ENCODE measurements at regions of chr15 and their contacts with region 1.

Region 1: GRCh38 chr15:41660235-41661077 is at the start of gene MGA:
- DNase-seq: peak; percentile 98
- ATAC-seq: peak; percentile 80
- H3K4me3 ChIP-seq: peak within 1 kb of the TSS; percentile 58 to 72 (median 63)
- H3K4me3 Mint-ChIP-seq: peak within 1 kb of the TSS; percentile 89
- H3K27ac ChIP-seq: peak within 1 kb of the TSS; percentile 94 to 95
- H3K27ac Mint-ChIP-seq: peak within 1 kb of the TSS; percentile 96
- H3K4me1 ChIP-seq: peaks cover 26 to 28% of the 10 kb centered on the region in 2 donors
- H3K4me1 Mint-ChIP-seq: peaks cover 44% of the 10 kb centered on the region
- H3K27me3 ChIP-seq: no peaks in the 10 kb centered on the region
- H3K27me3 Mint-ChIP-seq: no peaks in the 10 kb centered on the region
- CTCF ChIP-seq: no peak
- total RNA-seq, gene MGA: 77.2 and 79.7 TPM in 2 replicates

Region 2: DNA sequence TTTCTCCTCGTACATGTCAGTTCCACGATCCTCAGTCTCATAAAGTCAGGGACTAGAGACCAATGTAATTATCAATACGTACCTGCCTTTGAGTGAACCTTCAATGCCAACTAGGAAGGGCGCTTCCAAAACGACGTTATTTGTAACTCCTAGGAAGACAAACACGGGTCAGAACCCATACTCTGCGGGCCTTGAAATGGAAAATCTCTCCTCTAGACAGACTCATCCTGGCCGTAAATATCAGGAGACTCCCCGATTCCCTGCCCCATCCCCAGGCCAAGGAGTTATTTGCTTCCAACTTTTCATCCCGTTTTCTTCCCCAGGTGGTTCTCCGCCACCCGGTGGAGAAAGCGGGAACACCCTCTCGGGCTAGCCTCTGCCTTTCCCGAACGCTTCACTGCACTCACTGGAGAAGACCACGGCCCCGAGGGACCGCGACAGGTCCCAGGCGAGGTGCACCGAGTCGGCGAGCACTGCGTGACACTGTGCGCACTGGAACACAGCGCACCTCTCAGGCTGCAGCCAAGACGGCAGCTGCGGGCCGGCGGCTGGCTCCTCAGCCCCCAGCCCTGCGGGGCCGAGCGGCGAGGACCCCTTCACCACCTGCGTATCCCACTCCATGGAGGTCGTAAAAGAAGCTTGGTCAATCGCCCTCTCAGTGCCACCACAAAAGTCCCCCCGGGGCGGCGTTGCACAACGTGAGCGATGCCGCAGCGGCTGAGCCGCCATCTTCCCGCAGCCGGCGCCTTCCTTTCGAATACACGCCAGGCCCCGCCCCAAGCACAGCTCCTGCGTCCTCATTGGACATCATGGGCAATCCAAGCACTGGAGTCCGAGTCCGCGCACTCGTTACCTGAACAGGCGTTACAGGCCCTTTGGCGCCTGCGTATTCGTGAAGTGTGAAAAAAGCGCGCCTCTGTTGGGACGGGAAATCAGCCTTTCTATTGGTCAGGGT is 328.3 kb before region 1 on chr15 and contains the start of gene OIP5:
- CTCF ChIA-PET with region 1: no interaction called
- POLR2A ChIA-PET with region 1: no interaction called
- intact Hi-C with region 1: loop called (anchors 2 kb)
- DNase-seq: peak; percentile 98
- ATAC-seq: peak; percentile 94
- H3K4me3 ChIP-seq: peak within 1 kb of the TSS; percentile 84 to 98 (median 89)
- H3K4me3 Mint-ChIP-seq: peak within 1 kb of the TSS; percentile 99
- H3K27ac ChIP-seq: peak within 1 kb of the TSS; percentile 45 to 76
- H3K27ac Mint-ChIP-seq: peak within 1 kb of the TSS; percentile 95
- H3K4me1 ChIP-seq: peaks cover 13 to 19% of the 10 kb centered on the region in 2 donors
- H3K4me1 Mint-ChIP-seq: peaks cover 27% of the 10 kb centered on the region
- H3K27me3 ChIP-seq: no peaks in the 10 kb centered on the region
- H3K27me3 Mint-ChIP-seq: no peaks in the 10 kb centered on the region
- CTCF ChIP-seq: peak; percentile 57
- total RNA-seq, gene OIP5: 0.84 and 2.3 TPM in 2 replicates

Region 3: DNA sequence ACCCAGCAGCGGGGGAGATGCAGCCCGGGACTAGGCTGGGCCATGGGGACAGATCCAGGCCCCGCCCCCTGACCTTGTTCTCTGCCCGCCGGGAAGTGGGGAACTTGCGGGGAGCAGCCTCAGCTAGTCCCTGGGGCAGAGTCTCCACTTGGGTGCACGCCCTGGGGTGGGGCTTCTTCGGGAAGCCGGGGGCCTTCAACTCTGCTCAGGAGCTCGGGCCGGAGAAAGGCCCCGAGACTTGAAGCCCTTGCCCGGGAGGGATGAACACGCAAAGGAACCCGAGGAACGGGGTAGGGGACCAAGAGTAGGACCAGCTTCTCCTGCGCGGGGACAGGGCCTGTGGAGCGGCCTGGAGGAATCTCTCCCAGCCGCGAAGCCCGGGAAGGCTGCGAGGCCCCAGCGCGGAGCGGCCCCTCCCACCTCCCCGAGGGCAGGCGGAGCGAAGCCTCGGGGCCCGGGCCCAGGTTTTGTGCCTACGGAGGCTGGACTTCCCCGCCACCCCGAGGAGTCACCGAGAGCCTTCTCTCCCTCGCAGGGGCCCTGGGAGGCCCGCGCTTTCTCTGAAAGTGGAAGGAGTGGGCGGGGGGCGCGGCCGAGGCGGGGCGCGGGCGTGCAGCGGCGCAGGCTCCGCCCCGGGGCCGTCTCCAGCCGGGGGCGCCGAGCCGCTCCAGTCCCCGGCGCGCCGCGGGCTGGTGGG is 167.1 kb before region 1 on chr15 and contains the start of gene ITPKA:
- CTCF ChIA-PET with region 1: no interaction called
- POLR2A ChIA-PET with region 1: no interaction called
- intact Hi-C with region 1: loop called (anchors 2 kb)
- DNase-seq: peak; percentile 87
- ATAC-seq: peak; percentile 88
- H3K4me3 ChIP-seq: peak within 1 kb of the TSS; percentile 5 to 81 (median 67)
- H3K4me3 Mint-ChIP-seq: peak within 1 kb of the TSS; percentile 81
- H3K27ac ChIP-seq: no peak within 1 kb of the TSS
- H3K27ac Mint-ChIP-seq: peak within 1 kb of the TSS; percentile 50
- H3K4me1 ChIP-seq: peaks cover 30 to 32% of the 10 kb centered on the region in 2 donors
- H3K4me1 Mint-ChIP-seq: peaks cover 11% of the 10 kb centered on the region
- H3K27me3 ChIP-seq: peaks cover 0 to 82% (median 30%) of the 10 kb centered on the region in 4 experiments
- H3K27me3 Mint-ChIP-seq: peaks cover 40% of the 10 kb centered on the region
- CTCF ChIP-seq: no peak
- total RNA-seq, gene ITPKA: 0.22 TPM in 1 of 2 replicates, not detected in the other

Region 4: DNA sequence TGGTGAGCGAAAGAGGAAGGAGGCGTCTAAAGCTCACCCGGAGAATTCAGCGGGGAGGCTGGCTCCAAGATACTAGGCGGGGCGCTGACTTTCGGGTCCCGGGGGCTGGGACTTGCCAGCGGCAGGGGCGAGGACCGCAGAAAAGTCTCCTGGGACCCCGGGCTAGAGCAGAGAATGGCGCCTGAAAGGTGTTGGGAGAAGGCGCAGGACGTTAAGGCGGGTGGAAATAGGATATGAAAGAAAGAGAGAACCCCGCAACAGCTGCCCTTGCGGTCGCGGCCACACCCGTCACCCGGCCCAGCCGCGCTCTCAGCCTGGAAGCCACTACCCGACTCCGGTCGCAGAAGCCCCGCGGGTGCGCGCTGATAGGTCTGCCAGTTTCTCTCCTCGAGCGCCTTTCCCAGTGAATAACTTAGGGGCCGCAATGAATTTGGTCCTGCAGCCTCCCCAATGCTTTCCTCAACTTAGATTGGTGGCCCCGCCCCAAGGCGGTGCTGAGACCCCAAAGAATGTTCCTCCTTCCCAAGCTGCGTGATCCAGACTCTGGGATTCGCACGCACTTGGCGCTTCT is 147.4 kb before region 1 on chr15:
- CTCF ChIA-PET with region 1: no interaction called
- POLR2A ChIA-PET with region 1: no interaction called
- intact Hi-C with region 1: no loop called
- DNase-seq: peak; percentile 76
- ATAC-seq: peak; percentile 73
- H3K4me3 ChIP-seq: peak overlapping the region; percentile 34 to 76 (median 51)
- H3K4me3 Mint-ChIP-seq: peak overlapping the region; percentile 88
- H3K27ac ChIP-seq: no peak overlapping the region
- H3K27ac Mint-ChIP-seq: peak overlapping the region; percentile 71
- H3K4me1 ChIP-seq: peaks cover 30% of the 10 kb centered on the region in 2 donors
- H3K4me1 Mint-ChIP-seq: peaks cover 27% of the 10 kb centered on the region
- H3K27me3 ChIP-seq: peaks cover 0 to 27% (median 11%) of the 10 kb centered on the region in 4 experiments
- H3K27me3 Mint-ChIP-seq: peaks cover 6% of the 10 kb centered on the region
- CTCF ChIP-seq: no peak

Region 5: GRCh38 chr15:41621200-41622193 is 39.0 kb before region 1 on chr15:
- CTCF ChIA-PET with region 1: interaction called, 7 read pairs
- POLR2A ChIA-PET with region 1: interaction called, 16 read pairs
- intact Hi-C with region 1: loop called (anchors 1 kb)
- DNase-seq: peak; percentile 86
- ATAC-seq: peak; percentile 81
- H3K4me3 ChIP-seq: peak overlapping the region; percentile 40 to 57 (median 49)
- H3K4me3 Mint-ChIP-seq: peak overlapping the region; percentile 86
- H3K27ac ChIP-seq: no peak overlapping the region
- H3K27ac Mint-ChIP-seq: peak overlapping the region; percentile 83
- H3K4me1 ChIP-seq: peaks cover 15 to 17% of the 10 kb centered on the region in 2 donors
- H3K4me1 Mint-ChIP-seq: peaks cover 14% of the 10 kb centered on the region
- H3K27me3 ChIP-seq: no peaks in the 10 kb centered on the region
- H3K27me3 Mint-ChIP-seq: no peaks in the 10 kb centered on the region
- CTCF ChIP-seq: no peak

Region 6: GRCh38 chr15:41695750-41696426 is 35.4 kb after region 1 on chr15:
- CTCF ChIA-PET with region 1: interaction called, 8 read pairs
- POLR2A ChIA-PET with region 1: no interaction called
- intact Hi-C with region 1: loop called (anchors 1 kb)
- DNase-seq: peak; percentile 80
- ATAC-seq: peak; percentile 99
- H3K4me3 ChIP-seq: peak overlapping the region in 2 of 5 experiments; percentile 19 to 21
- H3K4me3 Mint-ChIP-seq: peak overlapping the region; percentile 35
- H3K27ac ChIP-seq: peak overlapping the region; percentile 52 to 77
- H3K27ac Mint-ChIP-seq: peak overlapping the region; percentile 51
- H3K4me1 ChIP-seq: peaks cover 12 to 28% of the 10 kb centered on the region in 2 donors
- H3K4me1 Mint-ChIP-seq: peaks cover 45% of the 10 kb centered on the region
- H3K27me3 ChIP-seq: no peaks in the 10 kb centered on the region
- H3K27me3 Mint-ChIP-seq: no peaks in the 10 kb centered on the region
- CTCF ChIP-seq: peak; percentile 66

Region 7: GRCh38 chr15:41827880-41828806 is 167.7 kb after region 1 on chr15 and contains the start of gene JMJD7:
- CTCF ChIA-PET with region 1: no interaction called
- POLR2A ChIA-PET with region 1: no interaction called
- intact Hi-C with region 1: loop called (anchors 2 kb)
- DNase-seq: peak; percentile 93
- ATAC-seq: peak; percentile 99
- H3K4me3 ChIP-seq: peak within 1 kb of the TSS; percentile 54 to 95 (median 87)
- H3K4me3 Mint-ChIP-seq: peak within 1 kb of the TSS; percentile 86
- H3K27ac ChIP-seq: peak within 1 kb of the TSS; percentile 32 to 53
- H3K27ac Mint-ChIP-seq: peak within 1 kb of the TSS; percentile 63
- H3K4me1 ChIP-seq: peaks cover 16 to 28% of the 10 kb centered on the region in 2 donors
- H3K4me1 Mint-ChIP-seq: peaks cover 26% of the 10 kb centered on the region
- H3K27me3 ChIP-seq: no peaks in the 10 kb centered on the region
- H3K27me3 Mint-ChIP-seq: no peaks in the 10 kb centered on the region
- CTCF ChIP-seq: no peak
- total RNA-seq, gene JMJD7: 41.1 and 43.9 TPM in 2 replicates

Region 8: GRCh38 chr15:41860049-41860828 is 199.8 kb after region 1 on chr15:
- CTCF ChIA-PET with region 1: no interaction called
- POLR2A ChIA-PET with region 1: no interaction called
- intact Hi-C with region 1: no loop called
- DNase-seq: no peak
- ATAC-seq: no peak
- H3K4me3 ChIP-seq: no peak overlapping the region
- H3K4me3 Mint-ChIP-seq: no peak overlapping the region
- H3K27ac ChIP-seq: no peak overlapping the region
- H3K27ac Mint-ChIP-seq: no peak overlapping the region
- H3K4me1 ChIP-seq: peaks cover 0 to 6% of the 10 kb centered on the region in 2 donors
- H3K4me1 Mint-ChIP-seq: no peaks in the 10 kb centered on the region
- H3K27me3 ChIP-seq: peaks cover 0 to 3% (median 0%) of the 10 kb centered on the region in 4 experiments
- H3K27me3 Mint-ChIP-seq: no peaks in the 10 kb centered on the region
- CTCF ChIP-seq: no peak

Measured in B cell (primary cell).